ENCODE measurements at regions of chr1 and their contacts with region 1.

Region 1: GRCh38 chr1:201709564-201710295 is 119.2 kb upstream of the IPO9 start:
- DNase-seq: peak; percentile 80
- H3K4me3 ChIP-seq: no peak overlapping the region
- H3K27ac ChIP-seq: peak overlapping the region; percentile 97
- H3K4me1 ChIP-seq: peaks cover 82% of the 10 kb centered on the region
- H3K27me3 ChIP-seq: no peaks in the 10 kb centered on the region
- CTCF ChIP-seq: peak; percentile 97

Region 2: GRCh38 chr1:201792534-201793305 is 83.0 kb after region 1 on chr1:
- intact Hi-C with region 1: loop called (anchors 5 kb)
- DNase-seq: peak; percentile 71
- H3K4me3 ChIP-seq: no peak overlapping the region
- H3K27ac ChIP-seq: peak overlapping the region; percentile 78
- H3K4me1 ChIP-seq: peaks cover 75% of the 10 kb centered on the region
- H3K27me3 ChIP-seq: no peaks in the 10 kb centered on the region
- CTCF ChIP-seq: peak; percentile 99